Stomach (tissue), 19 donors: ENCODE measurements at regions of chr19 and their contacts with region 1.

Region 1: GRCh38 chr19:8654591-8655339 is 24.3 kb downstream of the NFILZ start:
- DNase-seq: peak; percentile 47 to 78
- H3K4me3 ChIP-seq: peak overlapping the region in 2 of 4 donors; percentile 12 to 35
- H3K27ac ChIP-seq: no peak overlapping the region
- H3K4me1 ChIP-seq: peaks cover 0 to 7% (median 2%) of the 10 kb centered on the region in 4 donors
- H3K27me3 ChIP-seq: peaks cover 0 to 60% (median 0%) of the 10 kb centered on the region in 3 donors
- CTCF ChIP-seq: peak in 6 of 7 experiments; percentile 76 to 98 (median 93)
- EP300 ChIP-seq: no peak
- POLR2A ChIP-seq: no peak

Region 2: DNA sequence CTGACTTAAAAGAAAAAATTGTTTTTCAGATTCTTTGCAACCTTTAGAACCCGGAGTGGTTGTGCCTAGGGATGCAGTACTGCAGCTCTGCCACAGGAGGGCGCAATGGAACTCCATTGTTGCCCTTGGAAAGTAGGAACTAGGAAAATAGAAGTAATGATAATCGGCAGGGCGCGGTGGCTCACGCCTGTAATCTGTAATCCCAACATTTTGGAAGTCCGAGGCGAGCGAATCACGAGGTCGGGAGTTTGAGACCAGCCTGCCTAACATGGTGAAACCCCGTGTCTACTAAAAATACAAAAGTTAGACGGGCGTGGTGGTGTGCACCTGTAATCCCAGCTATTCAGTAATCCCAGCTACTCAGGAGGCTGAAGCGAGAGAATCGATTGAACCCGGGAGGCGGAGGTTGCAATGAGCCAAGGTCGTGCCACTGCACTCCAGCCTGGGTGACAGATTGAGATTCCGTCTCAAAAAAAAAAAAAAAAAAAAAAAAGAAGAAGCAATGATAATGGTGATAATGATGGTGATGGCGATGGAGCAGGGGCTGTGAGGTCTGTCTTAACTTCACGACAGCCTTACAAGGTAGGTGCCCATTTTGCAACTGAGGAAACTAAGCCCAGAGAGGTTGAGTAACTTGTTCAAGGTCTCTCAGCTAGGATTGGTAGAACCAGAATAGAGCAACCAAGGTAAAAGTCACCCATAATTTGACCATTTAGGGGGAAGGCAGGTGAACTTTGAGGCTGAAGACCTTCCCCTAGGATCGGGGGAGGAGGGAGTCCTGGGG is 38.8 kb before region 1 on chr19:
- intact Hi-C with region 1: no loop called
- DNase-seq: peak; percentile 45 to 81
- H3K4me3 ChIP-seq: no peak overlapping the region
- H3K27ac ChIP-seq: no peak overlapping the region
- H3K4me1 ChIP-seq: peaks cover 0 to 14% (median 5%) of the 10 kb centered on the region in 4 donors
- H3K27me3 ChIP-seq: peaks cover 0 to 26% (median 0%) of the 10 kb centered on the region in 3 donors
- CTCF ChIP-seq: peak in 5 of 7 experiments; percentile 45 to 86 (median 75)
- EP300 ChIP-seq: no peak
- POLR2A ChIP-seq: no peak

Region 3: GRCh38 chr19:9075064-9075949 is 420.5 kb after region 1 on chr19:
- intact Hi-C with region 1: loop called (anchors 5 kb)
- DNase-seq: peak; percentile 58 to 96
- H3K4me3 ChIP-seq: no peak overlapping the region
- H3K27ac ChIP-seq: peak overlapping the region in 2 of 5 donors; percentile 33 to 54
- H3K4me1 ChIP-seq: peaks cover 0 to 34% (median 14%) of the 10 kb centered on the region in 4 donors
- H3K27me3 ChIP-seq: no peaks in the 10 kb centered on the region
- CTCF ChIP-seq: no peak
- EP300 ChIP-seq: no peak
- POLR2A ChIP-seq: no peak